SK-N-SH (cell line): ENCODE measurements at regions of chr10 and their contacts with region 1.

Region 1: GRCh38 chr10:133329491-133330202 is 7.0 kb downstream of the CALY start:
- DNase-seq: peak; percentile 90
- H3K4me3 ChIP-seq: peak overlapping the region; percentile 2 to 37; a peak in 2 of 4 replicates
- H3K27ac ChIP-seq: no peak overlapping the region
- H3K4me1 ChIP-seq: peaks cover 7 to 28% of the 10 kb centered on the region in 2 experiments; a peak in 2 of 4 replicates
- H3K27me3 ChIP-seq: peaks cover 27% of the 10 kb centered on the region
- CTCF ChIP-seq: peak; percentile 92
- EP300 ChIP-seq: no peak
- RAD21 ChIP-seq: peak; percentile 87

Region 2: DNA sequence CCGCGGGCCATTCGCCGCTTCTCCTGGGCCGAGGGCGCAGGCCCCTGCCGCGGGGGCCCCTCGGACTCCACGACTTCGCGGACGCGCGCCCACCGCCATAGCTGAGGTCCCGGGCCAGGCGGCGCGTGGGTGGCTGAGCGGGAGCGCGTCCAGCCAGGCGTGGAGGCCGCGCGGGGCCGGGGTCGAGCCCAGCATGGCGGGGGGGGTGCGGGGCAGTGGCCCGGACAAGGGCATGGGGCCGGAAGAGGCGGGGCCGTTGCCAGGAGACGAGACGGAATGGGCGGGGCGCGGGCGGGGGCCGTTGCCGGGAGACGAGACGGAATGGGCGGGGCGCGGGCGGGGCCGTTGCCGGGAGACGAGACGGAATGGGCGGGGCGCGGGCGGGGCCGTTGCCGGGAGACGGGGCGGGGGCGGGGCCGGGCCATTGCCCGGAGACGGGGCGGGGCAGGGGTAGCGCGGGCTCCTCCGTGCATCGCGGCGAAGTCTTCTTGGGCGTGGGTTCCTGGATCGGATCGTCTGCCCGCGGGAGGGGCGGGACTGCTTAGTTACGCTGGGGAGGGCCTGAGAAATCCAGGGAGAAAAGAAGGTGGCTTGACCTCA is 67.8 kb before region 1 on chr10:
- CTCF ChIA-PET with region 1: no interaction called
- POLR2A ChIA-PET with region 1: no interaction called
- DNase-seq: peak; percentile 98
- H3K4me3 ChIP-seq: peak overlapping the region; percentile 47 to 60
- H3K27ac ChIP-seq: peak overlapping the region; percentile 22 to 76; a peak in 3 of 4 replicates
- H3K4me1 ChIP-seq: peaks cover 16 to 17% of the 10 kb centered on the region in 2 experiments; a peak in 3 of 4 replicates
- H3K27me3 ChIP-seq: no peaks in the 10 kb centered on the region
- CTCF ChIP-seq: no peak
- EP300 ChIP-seq: no peak
- RAD21 ChIP-seq: no peak

Region 3: DNA sequence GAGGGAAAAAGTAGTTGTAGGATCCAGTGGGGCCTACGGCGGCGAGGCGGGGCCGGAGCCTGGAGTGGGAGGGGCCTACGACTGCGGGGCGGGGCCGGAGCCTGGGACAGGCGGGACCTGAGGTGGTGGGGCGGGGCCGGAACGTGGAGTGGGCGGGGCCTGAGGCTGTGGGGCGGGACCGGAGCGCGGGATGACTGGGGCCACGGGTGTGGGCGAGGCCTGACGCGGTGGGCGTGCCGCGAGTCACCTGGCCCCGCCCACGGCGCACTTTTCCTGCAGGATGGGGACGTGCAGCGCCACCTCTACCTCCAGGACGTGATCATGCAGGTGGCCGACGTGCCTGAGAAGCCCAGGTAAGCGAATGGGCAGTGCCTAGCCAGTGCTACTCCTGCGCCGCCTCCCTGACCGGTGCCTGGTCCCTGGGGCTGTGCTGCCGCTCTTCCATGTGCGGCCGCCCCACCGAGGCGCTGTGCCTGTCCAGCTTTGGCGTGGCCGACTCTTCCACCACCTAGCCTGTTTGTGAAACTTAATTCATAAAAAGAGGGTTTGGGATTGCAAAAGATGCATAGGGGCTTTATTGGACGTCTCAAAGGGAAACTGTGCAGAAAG is 20.4 kb before region 1 on chr10:
- CTCF ChIA-PET with region 1: interaction called, 24 read pairs
- POLR2A ChIA-PET with region 1: interaction called, 5 read pairs
- DNase-seq: peak; percentile 99
- H3K4me3 ChIP-seq: peak overlapping the region; percentile 97 to 98
- H3K27ac ChIP-seq: peak overlapping the region; percentile 93 to 97
- H3K4me1 ChIP-seq: peaks cover 8 to 19% of the 10 kb centered on the region in 2 experiments; a peak in 2 of 4 replicates
- H3K27me3 ChIP-seq: no peaks in the 10 kb centered on the region
- CTCF ChIP-seq: no peak
- EP300 ChIP-seq: no peak
- RAD21 ChIP-seq: no peak

Region 4: GRCh38 chr10:133339708-133340380 is 10.2 kb after region 1 on chr10:
- CTCF ChIA-PET with region 1: interaction called, 21 read pairs
- POLR2A ChIA-PET with region 1: interaction called, 6 read pairs
- DNase-seq: no peak
- H3K4me3 ChIP-seq: no peak overlapping the region
- H3K27ac ChIP-seq: no peak overlapping the region
- H3K4me1 ChIP-seq: peaks cover 0 to 2% of the 10 kb centered on the region in 2 experiments; a peak in 2 of 4 replicates
- H3K27me3 ChIP-seq: peaks cover 68% of the 10 kb centered on the region
- CTCF ChIP-seq: no peak
- EP300 ChIP-seq: no peak
- RAD21 ChIP-seq: no peak

Region 5: DNA sequence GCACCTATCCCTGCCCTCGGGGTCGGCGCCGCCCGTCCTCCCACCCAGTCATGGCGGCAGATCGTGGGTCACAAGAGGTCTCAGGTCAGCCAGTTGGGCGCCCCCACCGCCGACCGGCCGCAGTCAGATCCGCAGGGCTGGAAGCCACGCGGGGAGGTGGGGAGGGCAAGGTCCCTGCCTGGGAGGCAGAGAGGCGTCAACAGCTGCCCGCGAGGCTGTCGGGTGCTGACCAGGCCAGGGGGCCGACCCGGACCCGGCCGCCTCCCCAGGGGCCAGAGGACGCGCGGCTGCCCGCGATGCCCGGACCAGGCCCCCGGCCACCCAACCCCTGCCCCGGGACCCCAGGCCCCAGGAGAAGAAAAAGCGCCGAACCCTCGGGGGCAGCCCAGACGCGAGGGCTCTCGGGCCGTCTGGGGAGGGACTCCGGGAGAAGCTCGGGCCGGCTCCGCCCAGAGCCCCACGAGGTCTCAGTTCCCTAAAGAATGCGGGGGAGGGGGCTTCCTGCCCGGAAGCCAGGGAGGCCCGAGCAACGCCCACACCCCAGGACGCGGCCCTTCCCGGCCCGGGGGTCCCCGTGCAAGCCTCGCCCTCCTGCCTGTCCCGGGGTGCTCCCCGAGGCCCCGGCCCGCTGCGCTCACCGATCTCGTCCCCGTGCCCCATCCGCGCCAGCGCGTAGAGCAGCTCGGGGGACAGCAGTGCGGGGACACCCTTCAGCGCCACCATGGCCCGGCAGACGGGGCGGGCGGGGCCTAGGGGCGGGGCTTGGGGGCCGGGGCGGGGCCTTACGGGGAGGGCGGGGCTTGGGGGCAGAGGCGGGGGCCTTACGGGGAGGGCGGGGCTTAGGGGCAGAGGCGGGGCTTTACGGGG is 27.9 kb after region 1 on chr10 and contains the start of gene FUOM:
- CTCF ChIA-PET with region 1: interaction called, 73 read pairs
- POLR2A ChIA-PET with region 1: interaction called, 4 read pairs
- DNase-seq: peak; percentile 99
- H3K4me3 ChIP-seq: peak within 1 kb of the TSS; percentile 58 to 59
- H3K27ac ChIP-seq: peak within 1 kb of the TSS in 1 of 2 experiments; percentile 43; a peak in 1 of 4 replicates
- H3K4me1 ChIP-seq: peaks cover 0 to 36% of the 10 kb centered on the region in 2 experiments; a peak in 1 of 4 replicates
- H3K27me3 ChIP-seq: no peaks in the 10 kb centered on the region
- CTCF ChIP-seq: no peak
- EP300 ChIP-seq: no peak
- RAD21 ChIP-seq: no peak
- polyA plus RNA-seq, gene FUOM: 25.3 and 32.5 TPM in 2 replicates

Region 6: DNA sequence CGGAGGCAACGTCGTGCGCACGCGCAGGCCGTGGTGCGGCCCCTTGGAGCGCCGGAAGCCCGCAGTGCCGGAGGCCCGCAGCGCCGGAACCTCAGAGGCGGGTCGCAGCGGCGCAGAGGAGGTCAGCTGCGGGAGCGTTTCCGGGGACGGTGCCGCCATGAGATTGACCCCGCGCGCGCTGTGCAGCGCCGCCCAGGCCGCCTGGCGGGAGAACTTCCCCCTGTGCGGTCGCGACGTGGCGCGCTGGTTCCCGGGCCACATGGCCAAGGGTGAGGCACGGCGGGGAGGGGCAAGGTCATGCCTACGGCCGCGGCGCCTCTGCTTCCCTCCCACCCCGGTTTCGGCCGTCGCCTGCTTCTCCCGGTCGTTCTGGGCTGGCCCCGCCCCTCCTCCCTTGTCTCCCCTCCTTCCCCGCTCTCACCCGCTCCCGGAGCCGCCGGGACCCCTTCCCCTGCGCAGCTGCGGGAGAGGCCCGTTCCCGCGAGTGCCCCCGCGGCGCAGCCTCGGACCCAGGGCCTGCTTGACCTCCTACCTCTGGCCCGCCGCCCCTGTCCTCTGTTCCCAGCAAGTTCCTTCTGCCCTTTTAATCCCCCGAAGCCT is 64.5 kb after region 1 on chr10 and contains the start of gene MTG1:
- CTCF ChIA-PET with region 1: interaction called, 12 read pairs
- POLR2A ChIA-PET with region 1: no interaction called
- DNase-seq: peak; percentile 91
- H3K4me3 ChIP-seq: peak within 1 kb of the TSS; percentile 94 to 96
- H3K27ac ChIP-seq: peak within 1 kb of the TSS; percentile 77 to 90
- H3K4me1 ChIP-seq: peaks cover 9 to 10% of the 10 kb centered on the region in 2 experiments; a peak in 2 of 4 replicates
- H3K27me3 ChIP-seq: no peaks in the 10 kb centered on the region
- CTCF ChIP-seq: 0 out of 2 replicates have a peak, but pooled peaks have one; percentile 14
- EP300 ChIP-seq: peak in 1 of 2 experiments; percentile 35; a peak in 1 of 4 replicates
- RAD21 ChIP-seq: no peak
- polyA plus RNA-seq, gene MTG1: 86.4 and 90.7 TPM in 2 replicates

Region 7: DNA sequence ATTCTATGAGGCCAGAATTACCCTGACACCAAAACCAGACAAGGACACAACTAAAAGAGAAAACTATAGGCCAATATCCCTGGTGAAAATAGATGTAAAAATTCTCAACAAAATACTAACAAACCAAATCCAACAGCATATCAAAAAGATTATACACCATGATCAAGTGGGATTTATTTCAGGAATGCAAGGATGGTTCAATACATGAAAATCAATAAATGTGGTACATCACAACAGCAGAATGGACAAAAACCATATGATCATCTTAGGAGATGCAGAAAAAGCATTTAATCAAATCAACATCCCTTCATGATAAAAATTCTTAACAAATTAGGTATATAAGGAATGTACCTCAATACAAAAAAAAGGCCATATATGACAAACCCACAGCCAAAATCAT is 118.5 kb after region 1 on chr10:
- CTCF ChIA-PET with region 1: no interaction called
- POLR2A ChIA-PET with region 1: no interaction called
- DNase-seq: no peak
- H3K4me3 ChIP-seq: no peak overlapping the region
- H3K27ac ChIP-seq: no peak overlapping the region
- H3K4me1 ChIP-seq: no peaks in the 10 kb centered on the region
- H3K27me3 ChIP-seq: no peaks in the 10 kb centered on the region
- CTCF ChIP-seq: no peak
- EP300 ChIP-seq: no peak
- RAD21 ChIP-seq: no peak

Region 8: DNA sequence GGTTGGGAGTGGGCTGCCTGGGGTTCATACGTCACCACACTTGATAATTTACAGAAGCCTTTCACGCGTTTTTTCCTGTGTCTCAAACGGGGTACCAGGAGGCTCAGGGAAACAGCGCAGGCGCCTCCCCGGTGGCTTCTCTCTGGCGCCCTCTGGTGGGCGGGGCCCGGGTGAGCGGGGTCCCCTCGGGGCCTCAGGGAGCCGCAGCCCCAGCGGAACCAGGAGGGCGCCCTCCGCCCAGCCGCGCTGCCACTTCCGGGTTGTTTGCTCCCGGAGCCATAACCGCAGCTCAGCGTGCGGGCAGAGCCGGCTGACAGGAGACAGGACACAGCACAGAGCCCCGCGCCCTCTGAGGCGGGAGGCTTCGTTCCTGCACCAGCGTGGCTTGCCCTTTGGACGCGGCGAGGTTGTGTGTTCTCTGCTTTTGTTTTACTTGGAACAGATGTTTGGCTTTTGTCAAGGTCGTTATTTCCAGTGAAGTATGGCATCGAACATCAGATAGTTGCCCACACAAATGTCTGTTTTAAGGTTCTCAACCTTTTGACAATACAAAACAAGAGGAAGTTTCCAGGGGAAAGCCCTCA is 190.6 kb after region 1 on chr10:
- CTCF ChIA-PET with region 1: interaction called, 12 read pairs
- POLR2A ChIA-PET with region 1: no interaction called
- DNase-seq: peak; percentile 94
- H3K4me3 ChIP-seq: peak overlapping the region; percentile 49 to 61
- H3K27ac ChIP-seq: no peak overlapping the region
- H3K4me1 ChIP-seq: peaks cover 0 to 4% of the 10 kb centered on the region in 2 experiments; a peak in 2 of 4 replicates
- H3K27me3 ChIP-seq: no peaks in the 10 kb centered on the region
- CTCF ChIP-seq: peak; percentile 79
- EP300 ChIP-seq: no peak
- RAD21 ChIP-seq: peak; percentile 39; the same call in 1 of the 2 replicates

Region 9: GRCh38 chr10:133616371-133617130 is 286.9 kb after region 1 on chr10:
- CTCF ChIA-PET with region 1: interaction called, 11 read pairs
- POLR2A ChIA-PET with region 1: interaction called, 3 read pairs
- DNase-seq: no peak
- H3K4me3 ChIP-seq: no peak overlapping the region
- H3K27ac ChIP-seq: no peak overlapping the region
- H3K4me1 ChIP-seq: no peaks in the 10 kb centered on the region
- H3K27me3 ChIP-seq: peaks cover 18% of the 10 kb centered on the region; the same call in 1 of the 2 replicates
- CTCF ChIP-seq: no peak
- EP300 ChIP-seq: no peak
- RAD21 ChIP-seq: no peak